ENCODE measurements at regions of chr17 and their contacts with region 1.

Region 1: GRCh38 chr17:68035523-68036303 is at the start of gene KPNA2:
- DNase-seq: peak; percentile 99
- ATAC-seq: peak; percentile 89
- H3K4me3 ChIP-seq: peak within 1 kb of the TSS; percentile 97
- H3K27ac ChIP-seq: peak within 1 kb of the TSS; percentile 66
- H3K4me1 ChIP-seq: peaks cover 24% of the 10 kb centered on the region
- H3K27me3 ChIP-seq: no peaks in the 10 kb centered on the region
- CTCF ChIP-seq: no peak
- total RNA-seq, gene KPNA2: 223 and 288 TPM in 2 replicates

Region 2: DNA sequence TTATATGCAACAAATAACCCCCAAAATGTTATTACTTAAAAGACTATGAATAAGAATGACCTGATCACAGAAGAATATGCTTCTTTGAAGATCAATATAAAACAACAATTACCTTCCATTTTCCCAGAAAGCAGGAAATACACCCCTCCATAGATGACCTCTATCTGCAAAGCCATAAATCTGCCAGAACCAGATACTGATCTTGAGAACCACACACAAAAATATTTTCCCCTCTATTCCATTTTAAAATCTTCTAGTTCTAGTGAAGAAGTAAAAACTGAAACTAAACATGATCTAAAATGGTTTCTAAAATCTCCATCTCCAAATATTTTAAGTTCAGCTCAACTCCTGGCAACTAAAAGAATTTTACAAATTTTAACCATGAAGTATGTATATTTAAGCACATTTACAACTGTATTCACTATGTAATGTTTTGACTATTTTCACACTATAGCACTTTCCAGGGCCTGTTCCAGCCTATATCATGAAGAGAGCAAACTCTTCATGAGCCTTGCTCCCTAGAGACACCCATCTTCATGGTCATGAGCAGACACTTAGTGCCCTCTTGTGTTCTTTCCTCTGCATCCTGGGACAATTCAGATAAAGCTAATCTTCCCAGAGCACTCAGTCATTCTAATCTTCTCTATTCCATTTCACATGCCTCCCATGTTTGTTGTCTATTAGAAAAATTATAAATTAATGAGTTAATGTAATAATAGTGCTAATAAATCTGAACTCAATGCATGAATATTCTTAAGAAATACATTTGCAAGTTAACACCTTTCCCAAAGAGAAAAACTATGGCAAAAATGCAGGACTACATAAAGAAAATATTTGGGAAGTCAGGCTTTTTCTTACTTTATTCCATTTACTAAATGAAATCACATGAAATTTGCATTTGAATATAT is 877.7 kb before region 1 on chr17:
- CTCF ChIA-PET with region 1: no interaction called
- POLR2A ChIA-PET with region 1: interaction called, 11 read pairs
- intact Hi-C with region 1: no loop called
- DNase-seq: peak; percentile 60
- ATAC-seq: peak; percentile 68
- H3K4me3 ChIP-seq: no peak overlapping the region
- H3K27ac ChIP-seq: no peak overlapping the region
- H3K4me1 ChIP-seq: peaks cover 15% of the 10 kb centered on the region; the same call in 1 of the 2 replicates
- H3K27me3 ChIP-seq: no peaks in the 10 kb centered on the region
- CTCF ChIP-seq: peak; percentile 74

Region 3: DNA sequence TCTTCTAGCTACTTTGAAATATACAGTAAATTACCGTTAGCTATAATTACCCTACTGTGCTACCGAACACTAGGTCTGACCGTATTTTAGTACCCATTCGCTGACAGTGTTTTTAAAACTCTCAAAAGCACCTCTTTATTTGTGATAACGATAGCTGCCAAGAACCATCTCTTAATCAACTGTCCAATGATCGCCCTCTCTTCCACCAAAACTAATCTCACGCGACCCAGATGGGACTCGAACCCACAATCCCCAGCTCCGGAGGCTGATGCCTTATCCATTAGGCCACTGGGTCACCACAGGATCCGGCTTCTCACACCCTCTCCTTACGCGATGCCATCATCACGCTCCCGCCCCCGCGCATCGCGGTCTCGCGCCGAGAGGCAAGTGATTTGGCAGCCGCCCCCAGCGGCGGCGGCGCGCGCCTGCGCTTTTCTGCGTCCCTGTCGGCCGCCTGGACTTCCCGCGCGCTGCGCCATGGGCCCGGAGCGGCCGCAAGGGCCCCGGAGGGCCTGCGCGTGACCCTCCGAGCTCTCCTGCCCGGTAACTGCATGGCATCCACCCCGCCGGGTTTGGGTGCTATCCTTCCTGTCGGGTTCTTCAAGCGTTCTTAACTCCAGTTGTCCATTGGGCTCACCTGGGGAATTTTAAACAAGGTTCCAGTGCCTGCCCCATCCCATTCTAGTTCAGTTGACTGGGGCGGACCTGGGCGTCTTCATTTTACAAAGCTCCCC is 15.9 kb before region 1 on chr17:
- CTCF ChIA-PET with region 1: no interaction called
- POLR2A ChIA-PET with region 1: interaction called, 10 read pairs
- intact Hi-C with region 1: loop called (anchors 1 kb)
- DNase-seq: peak; percentile 99
- ATAC-seq: peak; percentile 91
- H3K4me3 ChIP-seq: peak overlapping the region; percentile 68
- H3K27ac ChIP-seq: peak overlapping the region; percentile 44
- H3K4me1 ChIP-seq: peaks cover 5% of the 10 kb centered on the region
- H3K27me3 ChIP-seq: no peaks in the 10 kb centered on the region
- CTCF ChIP-seq: no peak; the same call in 1 of the 2 replicates

Region 4: GRCh38 chr17:68101075-68101992 is 65.6 kb after region 1 on chr17:
- CTCF ChIA-PET with region 1: no interaction called
- POLR2A ChIA-PET with region 1: no interaction called
- intact Hi-C with region 1: loop called (anchors 5 kb)
- DNase-seq: peak; percentile 95
- ATAC-seq: peak; percentile 99
- H3K4me3 ChIP-seq: peak overlapping the region; percentile 79
- H3K27ac ChIP-seq: peak overlapping the region; percentile 23; the same call in 1 of the 2 replicates
- H3K4me1 ChIP-seq: peaks cover 16% of the 10 kb centered on the region
- H3K27me3 ChIP-seq: no peaks in the 10 kb centered on the region
- CTCF ChIP-seq: no peak

Measured in PC-3 (cell line).